Activated CD8-positive, alpha-beta T cell treated with anti-CD3 and anti-CD28 coated beads, Interleukin-2, amount 10 ng/mL, durations not matched to agents 7 days and 5 days (primary cell): ENCODE measurements at regions of chr17 and their contacts with region 1.

Region 1: DNA sequence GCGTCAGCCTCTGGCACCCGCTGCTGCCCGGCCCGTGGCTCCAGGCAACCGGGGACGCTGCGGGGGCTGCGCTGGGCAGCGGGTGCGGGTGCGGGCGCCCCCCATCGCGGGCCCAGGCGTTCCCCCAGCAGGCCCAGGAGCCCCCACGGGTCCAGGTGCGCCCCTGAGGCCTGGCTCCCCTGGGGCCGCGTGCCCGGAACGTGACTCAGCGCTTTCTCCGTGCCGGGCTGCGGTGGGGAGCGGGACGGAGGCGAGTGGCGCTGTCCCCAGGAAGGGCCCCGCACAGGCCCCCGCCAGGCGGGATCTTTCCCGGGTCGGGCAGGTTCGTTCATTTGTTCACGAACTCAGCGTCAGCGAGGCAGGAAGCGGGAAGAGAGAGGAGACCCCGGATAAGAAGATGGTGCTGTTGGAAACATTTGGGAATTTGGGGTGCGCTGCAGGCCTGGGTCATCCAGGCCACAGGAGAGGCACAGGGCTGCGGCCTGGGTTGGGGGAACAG is 18.4 kb upstream of the EXOC7 start:
- DNase-seq: no peak
- ATAC-seq: peak; percentile 31
- H3K4me3 Mint-ChIP-seq: peak overlapping the region; percentile 26
- H3K27ac Mint-ChIP-seq: peak overlapping the region; percentile 73
- H3K4me1 Mint-ChIP-seq: peaks cover 45% of the 10 kb centered on the region
- H3K27me3 Mint-ChIP-seq: no peaks in the 10 kb centered on the region

Region 2: GRCh38 chr17:75940724-75941441 is 181.1 kb before region 1 on chr17 and contains the start of gene FBF1:
- CTCF ChIA-PET with region 1: no interaction called
- POLR2A ChIA-PET with region 1: no interaction called
- DNase-seq: peak; percentile 93
- ATAC-seq: peak; percentile 99
- H3K4me3 Mint-ChIP-seq: peak within 1 kb of the TSS; percentile 85
- H3K27ac Mint-ChIP-seq: peak within 1 kb of the TSS; percentile 83
- H3K4me1 Mint-ChIP-seq: peaks cover 16% of the 10 kb centered on the region
- H3K27me3 Mint-ChIP-seq: no peaks in the 10 kb centered on the region
- total RNA-seq, gene FBF1: 23.4 to 24.5 TPM

Region 3: GRCh38 chr17:76141212-76142038 is 19.4 kb after region 1 on chr17 and contains the start of gene FOXJ1:
- CTCF ChIA-PET with region 1: interaction called, 44 read pairs
- POLR2A ChIA-PET with region 1: interaction called, 8 read pairs
- DNase-seq: peak; percentile 94
- ATAC-seq: peak; percentile 55
- H3K4me3 Mint-ChIP-seq: peak within 1 kb of the TSS; percentile 76
- H3K27ac Mint-ChIP-seq: peak within 1 kb of the TSS; percentile 97
- H3K4me1 Mint-ChIP-seq: peaks cover 72% of the 10 kb centered on the region
- H3K27me3 Mint-ChIP-seq: no peaks in the 10 kb centered on the region
- total RNA-seq, gene FOXJ1: 8.7 to 9.1 TPM

Region 4: GRCh38 chr17:76246080-76247066 is 124.4 kb after region 1 on chr17:
- CTCF ChIA-PET with region 1: interaction called, 10 read pairs
- POLR2A ChIA-PET with region 1: interaction called, 4 read pairs
- DNase-seq: peak; percentile 91
- ATAC-seq: peak; percentile 97
- H3K4me3 Mint-ChIP-seq: peak overlapping the region; percentile 62
- H3K27ac Mint-ChIP-seq: peak overlapping the region; percentile 91
- H3K4me1 Mint-ChIP-seq: peaks cover 84% of the 10 kb centered on the region
- H3K27me3 Mint-ChIP-seq: no peaks in the 10 kb centered on the region

Region 5: GRCh38 chr17:76271669-76272540 is 149.9 kb after region 1 on chr17:
- CTCF ChIA-PET with region 1: interaction called, 28 read pairs
- POLR2A ChIA-PET with region 1: interaction called, 163 read pairs
- DNase-seq: peak; percentile 90
- ATAC-seq: peak; percentile 39
- H3K4me3 Mint-ChIP-seq: peak overlapping the region; percentile 84
- H3K27ac Mint-ChIP-seq: peak overlapping the region; percentile 99
- H3K4me1 Mint-ChIP-seq: peaks cover 66% of the 10 kb centered on the region
- H3K27me3 Mint-ChIP-seq: no peaks in the 10 kb centered on the region